ENCODE measurements at regions of chr5 and their contacts with region 1.

Region 1: DNA sequence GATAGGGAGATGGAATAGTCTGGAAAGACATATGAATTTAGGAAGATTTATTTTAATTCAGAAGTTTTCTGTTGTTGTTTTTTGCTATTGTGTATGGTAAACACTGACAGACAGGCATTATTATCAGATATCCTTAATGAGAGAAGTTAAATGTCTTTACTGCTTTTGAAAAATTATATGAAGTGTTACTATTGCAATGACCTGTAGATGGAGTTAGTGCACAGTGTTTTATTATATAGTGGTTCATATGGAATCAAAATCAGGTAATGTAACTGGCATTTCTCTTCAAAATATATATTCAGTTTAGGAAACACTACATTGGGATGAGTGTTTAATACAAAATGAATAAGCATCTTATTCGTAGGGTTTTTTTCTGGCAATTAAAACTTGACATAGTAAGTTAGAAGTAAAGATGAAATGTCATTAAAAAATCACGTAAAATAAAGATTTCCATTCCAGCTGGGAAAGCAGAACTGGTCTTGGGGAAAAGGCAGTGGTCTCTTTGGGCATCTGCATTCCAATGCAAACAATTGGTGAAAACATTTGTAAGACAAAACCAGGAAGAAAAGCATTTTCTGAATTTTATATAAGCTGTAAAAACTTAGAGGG is 3.9 kb downstream of the GABRA1 start:
- DNase-seq: no peak
- H3K4me3 Mint-ChIP-seq: no peak overlapping the region
- H3K27ac Mint-ChIP-seq: no peak overlapping the region
- H3K4me1 Mint-ChIP-seq: no peaks in the 10 kb centered on the region
- H3K27me3 Mint-ChIP-seq: no peaks in the 10 kb centered on the region
- CTCF ChIP-seq: no peak

Region 2: GRCh38 chr5:161001604-161002003 is 850.2 kb before region 1 on chr5:
- CTCF ChIA-PET with region 1: interaction called, 11 read pairs
- intact Hi-C with region 1: no loop called
- DNase-seq: no peak
- H3K4me3 Mint-ChIP-seq: no peak overlapping the region
- H3K27ac Mint-ChIP-seq: no peak overlapping the region
- H3K4me1 Mint-ChIP-seq: no peaks in the 10 kb centered on the region
- H3K27me3 Mint-ChIP-seq: no peaks in the 10 kb centered on the region
- CTCF ChIP-seq: no peak

Region 3: DNA sequence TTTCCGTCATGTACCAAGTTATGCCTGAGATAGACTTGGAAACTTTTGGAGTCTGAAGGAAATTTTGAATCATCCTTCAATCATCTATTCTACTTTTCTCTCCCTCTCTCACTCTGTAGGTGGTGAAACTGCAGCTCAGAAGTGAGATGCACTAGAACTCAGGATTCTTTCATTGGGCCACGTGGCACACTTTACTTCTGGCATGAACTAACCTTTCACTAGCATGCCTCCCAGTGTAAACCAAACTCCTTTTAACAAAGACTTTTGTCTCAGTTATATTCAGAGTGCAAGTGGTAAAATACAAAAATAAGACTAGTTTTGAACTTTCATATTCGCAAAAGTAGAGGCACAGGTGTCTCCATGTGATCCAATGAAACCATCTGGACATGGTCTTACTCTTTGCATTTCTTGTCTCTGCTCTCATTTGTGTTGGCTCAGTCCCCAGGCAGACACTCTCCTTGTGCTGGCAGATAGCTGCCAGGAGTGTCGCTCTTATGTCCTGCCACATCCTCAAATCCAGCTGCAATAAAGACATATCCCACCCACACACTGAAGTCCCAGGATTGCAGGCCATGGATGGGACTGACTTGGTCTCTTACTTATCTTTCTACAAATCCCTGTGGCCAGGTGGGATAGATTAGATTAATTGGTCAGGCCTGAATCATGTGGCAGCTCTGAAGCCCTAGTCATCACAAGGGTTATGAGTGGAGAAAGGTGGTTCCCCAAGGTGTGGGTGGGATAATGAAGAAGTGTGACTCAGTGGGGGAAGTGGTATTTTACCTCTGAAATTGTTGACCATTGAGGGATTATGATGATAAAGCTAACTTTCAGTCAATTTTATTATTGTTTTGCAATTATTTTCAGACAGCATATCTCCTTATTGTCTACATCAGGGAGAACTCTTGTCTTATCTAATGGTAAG is 572.8 kb before region 1 on chr5:
- CTCF ChIA-PET with region 1: no interaction called
- intact Hi-C with region 1: no loop called
- DNase-seq: no peak
- H3K4me3 Mint-ChIP-seq: no peak overlapping the region
- H3K27ac Mint-ChIP-seq: no peak overlapping the region
- H3K4me1 Mint-ChIP-seq: no peaks in the 10 kb centered on the region
- H3K27me3 Mint-ChIP-seq: peaks cover 8% of the 10 kb centered on the region
- CTCF ChIP-seq: no peak

Region 4: GRCh38 chr5:163347671-163348070 is 1495.9 kb after region 1 on chr5:
- CTCF ChIA-PET with region 1: no interaction called
- intact Hi-C with region 1: loop called (anchors 5 kb)
- DNase-seq: peak; percentile 76
- H3K4me3 Mint-ChIP-seq: no peak overlapping the region
- H3K27ac Mint-ChIP-seq: no peak overlapping the region
- H3K4me1 Mint-ChIP-seq: no peaks in the 10 kb centered on the region
- H3K27me3 Mint-ChIP-seq: no peaks in the 10 kb centered on the region
- CTCF ChIP-seq: peak; percentile 69

Measured in Calu3 (cell line).